CD4-positive, alpha-beta memory T cell (primary cell): ENCODE measurements at regions of chr9 and their contacts with region 1.

Region 1: DNA sequence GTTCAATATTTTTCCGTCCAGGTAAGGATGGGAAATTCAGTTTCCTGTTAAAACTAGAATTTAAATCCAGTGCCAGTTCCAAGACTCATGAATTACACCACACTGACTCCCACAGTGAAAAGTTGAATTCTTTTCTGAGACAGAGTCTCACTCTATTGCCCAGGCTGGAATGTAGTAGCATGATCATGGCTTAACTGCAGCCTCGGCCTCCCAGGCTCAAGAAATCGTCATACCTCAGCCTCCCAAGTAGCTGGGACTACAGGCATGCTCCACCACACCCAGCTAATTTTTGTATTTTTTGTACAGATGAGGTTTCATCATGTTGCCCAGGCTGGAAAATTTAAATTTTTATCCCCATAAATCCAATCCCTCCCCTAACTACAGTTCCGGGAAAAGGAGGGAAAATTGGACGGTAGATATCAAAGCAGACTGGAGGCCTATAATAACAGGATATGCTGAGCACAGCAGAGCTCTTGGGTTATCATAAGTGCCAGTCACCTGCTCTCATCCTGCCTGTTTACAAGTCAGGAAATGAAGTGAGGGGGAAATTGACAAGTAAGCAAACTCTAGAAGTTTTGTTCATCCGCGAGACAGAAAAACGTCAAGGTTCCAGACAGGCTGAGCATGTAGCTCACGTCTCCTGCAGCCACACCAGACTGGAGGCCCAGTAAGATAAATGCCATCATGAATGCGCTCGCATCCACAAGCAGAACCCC is 105.7 kb downstream of the UGCG start:
- DNase-seq: peak in 4 of 5 donors; percentile 31 to 58 (median 46)
- H3K4me3 ChIP-seq: no peak overlapping the region
- H3K4me3 Mint-ChIP-seq: peak overlapping the region in 7 of 8 donors; percentile 29 to 70 (median 55)
- H3K27ac ChIP-seq: no peak overlapping the region
- H3K27ac Mint-ChIP-seq: peak overlapping the region; percentile 50 to 95 (median 81)
- H3K4me1 ChIP-seq: peaks cover 35% of the 10 kb centered on the region
- H3K4me1 Mint-ChIP-seq: peaks cover 14 to 34% (median 27%) of the 10 kb centered on the region in 4 donors
- H3K27me3 ChIP-seq: no peaks in the 10 kb centered on the region
- H3K27me3 Mint-ChIP-seq: no peaks in the 10 kb centered on the region

Region 2: DNA sequence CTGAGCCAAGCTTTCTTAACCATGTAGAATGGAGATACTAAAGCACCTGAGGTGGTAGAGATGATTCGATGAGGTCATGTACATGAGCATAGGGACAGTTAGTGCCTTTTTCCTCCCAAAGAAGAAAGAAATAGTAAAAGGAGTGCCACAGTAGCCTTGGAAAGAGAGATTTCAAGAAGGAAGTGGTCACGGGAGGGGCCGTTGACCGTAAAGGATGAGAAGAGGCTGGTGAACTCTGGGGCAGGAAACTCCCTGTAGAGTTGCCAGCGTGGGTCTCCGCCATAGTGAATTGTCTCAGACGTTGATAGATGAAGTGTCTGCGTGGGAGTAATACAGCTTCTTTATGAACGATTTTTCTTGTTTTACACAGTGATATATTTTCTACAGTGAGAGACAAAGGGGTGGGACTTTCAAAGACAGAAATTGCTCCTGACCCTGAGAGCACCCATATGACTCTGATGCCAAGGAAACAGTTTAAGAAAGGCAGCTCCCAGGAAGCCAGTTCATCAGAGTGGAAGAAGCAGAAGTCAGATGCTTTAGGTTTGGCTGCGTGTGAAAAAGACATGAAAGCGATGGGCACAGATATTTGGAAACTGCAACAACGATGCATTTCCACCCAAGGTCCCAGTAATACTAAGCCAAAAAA is 64.4 kb before region 1 on chr9:
- CTCF ChIA-PET with region 1: no interaction called
- POLR2A ChIA-PET with region 1: interaction called, 5 read pairs
- intact Hi-C with region 1: loop called (anchors 5 kb)
- DNase-seq: peak; percentile 56 to 79 (median 60)
- H3K4me3 ChIP-seq: peak overlapping the region in 1 of 2 donors; percentile 42
- H3K4me3 Mint-ChIP-seq: peak overlapping the region; percentile 57 to 93 (median 82)
- H3K27ac ChIP-seq: peak overlapping the region; percentile 39
- H3K27ac Mint-ChIP-seq: peak overlapping the region; percentile 74 to 97 (median 96)
- H3K4me1 ChIP-seq: peaks cover 31% of the 10 kb centered on the region
- H3K4me1 Mint-ChIP-seq: peaks cover 25 to 41% (median 33%) of the 10 kb centered on the region in 4 donors
- H3K27me3 ChIP-seq: no peaks in the 10 kb centered on the region
- H3K27me3 Mint-ChIP-seq: no peaks in the 10 kb centered on the region

Region 3: DNA sequence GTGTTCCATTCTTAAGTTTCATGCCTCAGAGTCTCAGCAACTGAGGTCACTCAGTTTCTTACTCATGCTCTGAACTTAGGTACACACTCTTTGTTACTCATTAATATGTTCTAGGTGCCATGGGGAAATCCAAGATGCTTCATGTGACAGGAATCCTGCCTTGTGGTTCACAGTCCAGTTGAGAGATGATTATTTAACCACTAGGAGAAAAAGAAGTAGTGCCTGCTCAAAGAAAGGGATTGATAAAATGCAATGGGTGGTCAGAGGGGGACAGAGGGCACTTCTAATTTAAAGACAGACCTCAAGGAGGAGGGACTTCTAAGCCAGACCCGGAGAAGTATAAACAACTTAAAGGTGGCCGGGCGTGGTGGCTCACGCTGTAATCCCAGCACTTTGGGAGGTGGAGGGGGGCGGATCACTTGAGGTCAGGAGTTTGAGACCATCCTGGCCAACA is 36.7 kb before region 1 on chr9:
- CTCF ChIA-PET with region 1: no interaction called
- POLR2A ChIA-PET with region 1: no interaction called
- intact Hi-C with region 1: no loop called
- DNase-seq: no peak
- H3K4me3 ChIP-seq: no peak overlapping the region
- H3K4me3 Mint-ChIP-seq: no peak overlapping the region
- H3K27ac ChIP-seq: no peak overlapping the region
- H3K27ac Mint-ChIP-seq: no peak overlapping the region
- H3K4me1 ChIP-seq: no peaks in the 10 kb centered on the region
- H3K4me1 Mint-ChIP-seq: peaks cover 0 to 3% (median 0%) of the 10 kb centered on the region in 4 donors
- H3K27me3 ChIP-seq: no peaks in the 10 kb centered on the region
- H3K27me3 Mint-ChIP-seq: peaks cover 0 to 3% of the 10 kb centered on the region in 2 donors

Region 4: GRCh38 chr9:111985315-111985714 is 17.0 kb before region 1 on chr9:
- CTCF ChIA-PET with region 1: interaction called, 3 read pairs
- POLR2A ChIA-PET with region 1: interaction called, 14 read pairs
- intact Hi-C with region 1: no loop called
- DNase-seq: no peak
- H3K4me3 ChIP-seq: no peak overlapping the region
- H3K4me3 Mint-ChIP-seq: peak overlapping the region in 1 of 8 donors; percentile 43
- H3K27ac ChIP-seq: no peak overlapping the region
- H3K27ac Mint-ChIP-seq: peak overlapping the region in 1 of 7 donors; percentile 13
- H3K4me1 ChIP-seq: peaks cover 28% of the 10 kb centered on the region
- H3K4me1 Mint-ChIP-seq: peaks cover 21 to 40% (median 29%) of the 10 kb centered on the region in 4 donors
- H3K27me3 ChIP-seq: no peaks in the 10 kb centered on the region
- H3K27me3 Mint-ChIP-seq: no peaks in the 10 kb centered on the region

Region 5: DNA sequence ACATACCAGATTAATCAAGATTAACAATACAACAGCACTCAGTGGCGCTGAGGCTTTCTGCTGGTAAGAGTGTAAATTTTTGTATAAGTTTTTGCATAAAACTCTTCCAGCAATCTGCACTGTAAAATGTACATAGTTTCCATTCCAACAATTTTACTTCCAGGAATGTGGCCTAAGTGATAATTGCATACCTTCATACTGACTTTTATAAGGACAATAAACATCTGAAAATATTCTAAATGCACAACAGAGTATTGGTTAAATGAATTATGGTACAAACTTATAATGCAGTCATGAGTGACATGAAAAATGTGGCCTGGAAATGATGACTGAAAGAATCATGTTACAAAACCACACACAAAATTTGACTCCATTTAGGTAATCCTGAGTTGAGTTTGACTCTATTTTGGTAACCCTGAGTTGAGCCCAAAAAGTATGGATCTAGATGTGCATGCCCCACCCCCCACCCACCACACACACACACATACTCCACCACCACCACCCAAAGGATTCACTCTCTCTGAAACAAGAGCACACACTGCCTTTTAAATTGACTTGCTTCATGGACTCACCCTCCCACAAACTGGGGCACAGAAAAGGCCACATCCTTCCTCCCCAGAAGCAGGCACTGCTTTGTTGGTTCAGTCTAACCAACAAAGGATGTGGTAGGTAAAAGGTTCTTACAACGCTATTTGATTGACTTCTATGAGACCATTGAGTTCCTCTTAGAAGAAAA is 35.2 kb after region 1 on chr9:
- CTCF ChIA-PET with region 1: interaction called, 3 read pairs
- POLR2A ChIA-PET with region 1: interaction called, 14 read pairs
- intact Hi-C with region 1: loop called (anchors 2 kb)
- DNase-seq: peak; percentile 83 to 90 (median 84)
- H3K4me3 ChIP-seq: peak overlapping the region in 1 of 2 donors; percentile 28
- H3K4me3 Mint-ChIP-seq: peak overlapping the region; percentile 46 to 90 (median 68)
- H3K27ac ChIP-seq: no peak overlapping the region
- H3K27ac Mint-ChIP-seq: peak overlapping the region in 6 of 7 donors; percentile 31 to 90 (median 72)
- H3K4me1 ChIP-seq: peaks cover 56% of the 10 kb centered on the region
- H3K4me1 Mint-ChIP-seq: peaks cover 36 to 73% (median 52%) of the 10 kb centered on the region in 4 donors
- H3K27me3 ChIP-seq: no peaks in the 10 kb centered on the region
- H3K27me3 Mint-ChIP-seq: no peaks in the 10 kb centered on the region

Region 6: GRCh38 chr9:112112941-112113681 is 110.8 kb after region 1 on chr9:
- CTCF ChIA-PET with region 1: no interaction called
- POLR2A ChIA-PET with region 1: no interaction called
- intact Hi-C with region 1: no loop called
- DNase-seq: peak in 4 of 5 donors; percentile 18 to 28 (median 25)
- H3K4me3 ChIP-seq: no peak overlapping the region
- H3K4me3 Mint-ChIP-seq: no peak overlapping the region
- H3K27ac ChIP-seq: no peak overlapping the region
- H3K27ac Mint-ChIP-seq: peak overlapping the region in 1 of 7 donors; percentile 15
- H3K4me1 ChIP-seq: no peaks in the 10 kb centered on the region
- H3K4me1 Mint-ChIP-seq: no peaks in the 10 kb centered on the region
- H3K27me3 ChIP-seq: no peaks in the 10 kb centered on the region
- H3K27me3 Mint-ChIP-seq: no peaks in the 10 kb centered on the region